OCI-LY7 (cell line): ENCODE measurements at regions of chr2 and their contacts with region 1.

Region 1: GRCh38 chr2:193843675-193844074 is 1648.9 kb upstream of the TMEFF2 start:
- DNase-seq: no peak
- H3K4me3 ChIP-seq: no peak overlapping the region
- H3K27ac ChIP-seq: no peak overlapping the region
- H3K4me1 ChIP-seq: no peaks in the 10 kb centered on the region
- CTCF ChIP-seq: no peak

Region 2: GRCh38 chr2:193111529-193111928 is 732.1 kb before region 1 on chr2:
- CTCF ChIA-PET with region 1: no interaction called
- POLR2A ChIA-PET with region 1: no interaction called
- intact Hi-C with region 1: no loop called
- DNase-seq: no peak
- H3K4me3 ChIP-seq: no peak overlapping the region
- H3K27ac ChIP-seq: no peak overlapping the region
- H3K4me1 ChIP-seq: no peaks in the 10 kb centered on the region
- CTCF ChIP-seq: no peak

Region 3: GRCh38 chr2:193409951-193410350 is 433.7 kb before region 1 on chr2:
- CTCF ChIA-PET with region 1: no interaction called
- POLR2A ChIA-PET with region 1: no interaction called
- intact Hi-C with region 1: no loop called
- DNase-seq: no peak
- H3K4me3 ChIP-seq: no peak overlapping the region
- H3K27ac ChIP-seq: no peak overlapping the region
- H3K4me1 ChIP-seq: no peaks in the 10 kb centered on the region
- CTCF ChIP-seq: no peak

Region 4: GRCh38 chr2:193539188-193539587 is 304.5 kb before region 1 on chr2:
- CTCF ChIA-PET with region 1: no interaction called
- POLR2A ChIA-PET with region 1: no interaction called
- intact Hi-C with region 1: no loop called
- DNase-seq: no peak
- H3K4me3 ChIP-seq: no peak overlapping the region
- H3K27ac ChIP-seq: no peak overlapping the region
- H3K4me1 ChIP-seq: peaks cover 14% of the 10 kb centered on the region
- CTCF ChIP-seq: no peak

Region 5: GRCh38 chr2:193701484-193701883 is 142.2 kb before region 1 on chr2:
- CTCF ChIA-PET with region 1: no interaction called
- POLR2A ChIA-PET with region 1: no interaction called
- intact Hi-C with region 1: no loop called
- DNase-seq: no peak
- H3K4me3 ChIP-seq: no peak overlapping the region
- H3K27ac ChIP-seq: no peak overlapping the region
- H3K4me1 ChIP-seq: no peaks in the 10 kb centered on the region
- CTCF ChIP-seq: no peak

Region 6: DNA sequence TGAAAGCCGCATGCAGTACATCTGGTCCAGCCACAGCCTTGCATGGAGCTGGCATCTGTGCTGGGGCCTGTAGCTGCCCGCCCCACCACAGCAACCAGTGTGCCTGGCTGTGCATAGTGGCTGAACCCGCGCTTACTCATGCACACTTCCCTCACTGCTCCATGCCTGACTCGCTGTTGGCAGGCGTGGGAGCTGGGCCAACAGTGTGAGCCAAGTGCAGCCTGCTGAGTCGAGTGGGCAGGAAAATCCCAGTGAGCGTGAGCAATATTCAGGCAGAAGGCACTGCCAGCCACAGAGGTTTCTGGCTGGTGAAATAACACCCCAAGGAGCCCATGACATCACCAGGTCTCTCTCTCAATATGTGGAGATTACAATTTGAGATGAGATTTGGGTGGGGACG is 25.2 kb after region 1 on chr2:
- CTCF ChIA-PET with region 1: no interaction called
- POLR2A ChIA-PET with region 1: no interaction called
- intact Hi-C with region 1: loop called (anchors 2 kb)
- DNase-seq: no peak
- H3K4me3 ChIP-seq: no peak overlapping the region
- H3K27ac ChIP-seq: no peak overlapping the region
- H3K4me1 ChIP-seq: no peaks in the 10 kb centered on the region
- CTCF ChIP-seq: no peak